Psoas muscle (tissue), 8 donors: ENCODE measurements at regions of chr2 and their contacts with region 1.

Region 1: GRCh38 chr2:115234737-115235136 is 792.3 kb downstream of the DPP10 start:
- DNase-seq: no peak
- ATAC-seq: no peak
- H3K4me3 ChIP-seq: no peak overlapping the region
- H3K27ac ChIP-seq: no peak overlapping the region
- H3K4me1 ChIP-seq: no peaks in the 10 kb centered on the region
- H3K27me3 ChIP-seq: no peaks in the 10 kb centered on the region
- CTCF ChIP-seq: no peak

Region 2: DNA sequence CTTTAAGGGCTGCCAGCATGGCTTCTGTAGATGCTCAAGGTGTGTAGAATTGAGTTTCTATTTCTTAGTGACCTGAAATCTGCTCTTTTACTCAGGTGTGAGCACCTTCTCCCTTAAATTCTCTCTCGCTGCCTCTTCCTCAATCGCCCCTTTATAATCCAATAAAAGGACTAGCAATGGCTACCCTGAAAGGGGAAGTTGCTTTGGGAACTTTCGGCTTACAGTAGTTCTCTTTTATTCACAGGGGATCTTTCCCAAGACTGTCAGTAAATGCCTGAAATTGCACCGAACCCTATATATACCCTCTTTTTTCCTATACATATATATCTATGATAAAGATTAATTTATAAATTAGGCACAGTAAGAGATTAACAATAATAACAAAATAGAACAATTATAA is 1223.0 kb before region 1 on chr2:
- intact Hi-C with region 1: loop called in 1 of 2 experiments (anchors 5 kb)
- DNase-seq: no peak
- ATAC-seq: no peak
- H3K4me3 ChIP-seq: no peak overlapping the region
- H3K27ac ChIP-seq: no peak overlapping the region
- H3K4me1 ChIP-seq: no peaks in the 10 kb centered on the region
- H3K27me3 ChIP-seq: no peaks in the 10 kb centered on the region
- CTCF ChIP-seq: no peak

Region 3: DNA sequence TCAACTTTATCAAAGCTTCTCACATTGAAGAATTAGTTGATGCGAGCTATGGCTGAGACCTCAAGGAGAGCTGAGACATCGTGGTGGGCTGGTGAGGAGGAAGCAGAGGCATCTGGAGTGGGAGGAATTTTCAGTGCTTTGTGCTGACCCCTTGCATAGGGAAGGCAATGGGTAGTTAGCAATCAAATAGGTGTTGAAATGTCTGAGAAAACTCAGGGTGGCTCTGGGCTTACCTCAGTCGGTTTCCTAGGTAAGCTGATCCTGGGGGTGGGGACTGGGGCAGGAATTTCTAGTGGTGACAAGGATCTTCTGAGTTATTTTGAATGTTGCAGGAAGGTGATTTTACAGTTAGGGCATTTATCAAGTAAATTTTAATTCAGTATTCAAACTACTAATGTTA is 813.0 kb before region 1 on chr2:
- intact Hi-C with region 1: no loop called
- DNase-seq: no peak
- ATAC-seq: no peak
- H3K4me3 ChIP-seq: no peak overlapping the region
- H3K27ac ChIP-seq: no peak overlapping the region
- H3K4me1 ChIP-seq: no peaks in the 10 kb centered on the region
- H3K27me3 ChIP-seq: no peaks in the 10 kb centered on the region
- CTCF ChIP-seq: no peak

Region 4: DNA sequence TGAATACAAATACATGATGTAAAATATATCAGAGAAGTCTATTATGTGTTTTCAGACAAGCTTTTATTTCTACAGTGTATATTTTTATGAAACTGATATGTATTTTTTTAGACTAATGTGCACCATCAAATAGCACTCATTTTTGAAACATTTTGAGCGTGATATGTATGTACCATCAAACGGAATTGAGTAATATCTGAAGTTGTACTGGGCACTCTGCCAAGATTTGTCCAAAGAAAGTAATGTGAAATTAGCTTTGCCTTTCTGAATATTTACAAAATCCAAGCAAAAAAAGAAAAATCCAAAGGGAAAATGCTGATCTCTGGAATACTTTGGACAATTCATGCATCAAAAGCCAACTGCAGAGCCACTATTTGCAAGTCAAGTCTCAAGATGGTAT is 179.7 kb after region 1 on chr2:
- intact Hi-C with region 1: no loop called
- DNase-seq: no peak
- ATAC-seq: no peak
- H3K4me3 ChIP-seq: no peak overlapping the region
- H3K27ac ChIP-seq: no peak overlapping the region
- H3K4me1 ChIP-seq: no peaks in the 10 kb centered on the region
- H3K27me3 ChIP-seq: no peaks in the 10 kb centered on the region
- CTCF ChIP-seq: no peak